Activated CD4-positive, alpha-beta memory T cell treated with anti-CD3 and anti-CD28 coated beads for 36 hours (primary cell): ENCODE measurements at regions of chr9 and their contacts with region 1.

Region 1: GRCh38 chr9:127423934-127424675 is at the start of gene ZNF79:
- DNase-seq: peak; percentile 96
- H3K4me3 Mint-ChIP-seq: peak within 1 kb of the TSS; percentile 98
- H3K27ac Mint-ChIP-seq: peak within 1 kb of the TSS; percentile 93
- H3K4me1 Mint-ChIP-seq: peaks cover 43% of the 10 kb centered on the region
- H3K27me3 Mint-ChIP-seq: no peaks in the 10 kb centered on the region
- total RNA-seq, gene ZNF79: 9.3 to 9.7 TPM

Region 2: DNA sequence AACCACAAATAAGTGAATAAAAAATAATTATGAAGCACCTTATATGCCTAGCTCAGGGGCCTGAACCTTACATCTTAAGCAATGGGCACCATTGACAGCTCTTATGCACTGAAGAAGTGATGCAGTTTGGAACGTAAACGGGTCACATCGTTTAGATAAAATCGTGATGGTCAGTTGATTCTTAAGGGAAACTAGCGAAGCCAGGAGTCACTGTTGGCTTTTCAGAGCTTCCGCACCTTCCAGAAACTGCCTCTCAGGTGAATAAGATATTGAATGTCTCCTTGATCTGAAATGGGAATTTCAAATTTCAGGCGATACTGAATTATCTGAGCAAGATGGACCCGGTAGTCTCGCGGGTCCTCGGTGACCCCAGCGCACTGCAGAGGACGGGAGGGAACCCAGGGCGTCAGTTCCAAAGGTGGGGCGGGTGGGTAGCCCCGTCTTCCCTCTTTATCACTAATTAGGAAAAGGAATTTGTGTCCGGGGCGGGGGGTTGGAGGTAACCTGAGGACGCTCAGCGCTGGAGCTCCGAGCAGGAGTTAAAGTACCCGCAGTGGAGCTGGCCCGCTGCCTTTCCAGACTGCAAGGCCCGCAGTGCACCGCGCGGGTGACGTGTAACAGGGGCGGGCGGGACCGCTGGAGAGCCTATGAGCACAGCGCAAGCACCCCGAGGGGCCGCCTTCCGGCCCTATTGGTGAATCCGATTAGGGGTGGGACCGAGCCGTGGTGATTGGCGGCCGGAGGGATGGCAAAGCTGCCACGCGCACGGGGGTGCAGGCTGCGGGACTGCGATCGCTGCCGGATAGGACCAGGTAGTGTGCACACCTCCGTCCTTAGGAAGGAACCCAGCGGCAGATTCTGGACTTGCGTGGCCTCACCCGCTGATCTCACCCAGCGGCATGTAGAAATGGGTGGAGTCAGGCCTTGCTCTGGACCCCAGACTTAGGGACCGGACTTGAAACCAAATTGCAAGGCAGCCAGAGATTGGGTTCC is 179.2 kb before region 1 on chr9:
- CTCF ChIA-PET with region 1: no interaction called
- POLR2A ChIA-PET with region 1: interaction called, 5 read pairs
- intact Hi-C with region 1: loop called (anchors 10 kb)
- DNase-seq: peak; percentile 97
- H3K4me3 Mint-ChIP-seq: peak overlapping the region; percentile 80
- H3K27ac Mint-ChIP-seq: peak overlapping the region; percentile 20
- H3K4me1 Mint-ChIP-seq: peaks cover 7% of the 10 kb centered on the region
- H3K27me3 Mint-ChIP-seq: no peaks in the 10 kb centered on the region

Region 3: DNA sequence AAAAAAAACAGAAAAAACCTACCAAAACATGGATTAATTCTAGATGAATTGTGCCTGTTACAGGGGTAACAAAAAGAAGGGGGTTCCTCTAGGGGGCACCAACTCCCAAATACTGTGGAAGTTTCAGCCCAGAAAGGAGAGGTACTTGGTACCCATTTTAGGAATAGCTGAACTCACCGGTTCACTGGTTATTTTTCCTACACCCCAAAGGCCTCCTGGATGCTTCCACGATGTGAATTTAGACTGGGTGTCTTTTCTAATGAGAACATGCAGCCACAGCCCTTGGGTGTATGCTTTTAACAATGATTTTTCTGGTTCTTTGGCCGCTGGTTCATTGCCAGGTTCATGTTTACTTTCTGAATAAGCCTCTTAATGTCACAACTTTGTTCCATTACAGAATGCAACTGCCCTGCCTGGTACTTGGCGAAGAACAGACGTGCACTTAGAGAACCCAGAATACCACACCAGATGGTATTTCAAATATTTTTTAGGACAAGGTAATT is 112.8 kb before region 1 on chr9:
- CTCF ChIA-PET with region 1: no interaction called
- POLR2A ChIA-PET with region 1: no interaction called
- intact Hi-C with region 1: loop called (anchors 10 kb)
- DNase-seq: peak; percentile 39
- H3K4me3 Mint-ChIP-seq: no peak overlapping the region
- H3K27ac Mint-ChIP-seq: no peak overlapping the region
- H3K4me1 Mint-ChIP-seq: no peaks in the 10 kb centered on the region
- H3K27me3 Mint-ChIP-seq: peaks cover 5% of the 10 kb centered on the region

Region 4: GRCh38 chr9:127388037-127388855 is 35.9 kb before region 1 on chr9:
- CTCF ChIA-PET with region 1: interaction called, 4 read pairs
- POLR2A ChIA-PET with region 1: interaction called, 8 read pairs
- intact Hi-C with region 1: loop called (anchors 1 kb)
- DNase-seq: peak; percentile 94
- H3K4me3 Mint-ChIP-seq: peak overlapping the region; percentile 38
- H3K27ac Mint-ChIP-seq: peak overlapping the region; percentile 70
- H3K4me1 Mint-ChIP-seq: peaks cover 30% of the 10 kb centered on the region
- H3K27me3 Mint-ChIP-seq: peaks cover 62% of the 10 kb centered on the region

Region 5: GRCh38 chr9:127396808-127397497 is 27.2 kb before region 1 on chr9 and contains the start of gene SLC2A8:
- CTCF ChIA-PET with region 1: interaction called, 4 read pairs
- POLR2A ChIA-PET with region 1: interaction called, 6 read pairs
- intact Hi-C with region 1: loop called (anchors 1 kb)
- DNase-seq: peak; percentile 97
- H3K4me3 Mint-ChIP-seq: peak within 1 kb of the TSS; percentile 60
- H3K27ac Mint-ChIP-seq: no peak within 1 kb of the TSS
- H3K4me1 Mint-ChIP-seq: peaks cover 16% of the 10 kb centered on the region
- H3K27me3 Mint-ChIP-seq: peaks cover 57% of the 10 kb centered on the region
- total RNA-seq, gene SLC2A8: 3.2 to 4.6 TPM

Region 6: DNA sequence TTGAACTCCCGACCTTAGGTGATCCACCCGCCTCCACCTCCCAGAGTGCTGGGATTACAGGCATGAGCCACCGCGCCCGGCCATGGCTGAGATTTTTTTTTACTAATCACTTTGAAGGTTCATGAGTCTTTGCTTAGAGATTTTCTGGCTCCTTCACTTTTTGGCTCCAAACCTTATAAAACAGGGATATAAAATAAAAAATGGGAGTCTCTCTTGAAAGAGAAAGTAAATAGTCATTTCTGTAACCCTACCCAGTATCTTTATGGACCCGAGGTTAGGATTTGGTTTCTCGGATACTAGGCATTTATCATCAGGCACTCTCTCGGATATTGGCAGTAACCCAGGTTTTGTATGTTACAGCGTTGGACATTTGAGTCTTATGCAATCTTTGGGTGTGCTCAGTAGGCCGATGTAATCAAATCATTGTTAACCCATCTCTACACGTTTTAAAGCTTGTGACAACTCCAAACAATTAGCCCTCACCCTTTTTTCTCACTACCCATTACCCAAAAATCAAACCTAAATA is 213.3 kb after region 1 on chr9:
- CTCF ChIA-PET with region 1: no interaction called
- POLR2A ChIA-PET with region 1: no interaction called
- intact Hi-C with region 1: no loop called
- DNase-seq: no peak
- H3K4me3 Mint-ChIP-seq: no peak overlapping the region
- H3K27ac Mint-ChIP-seq: no peak overlapping the region
- H3K4me1 Mint-ChIP-seq: peaks cover 12% of the 10 kb centered on the region
- H3K27me3 Mint-ChIP-seq: no peaks in the 10 kb centered on the region